PC-3 (cell line): ENCODE measurements at regions of chr6 and their contacts with region 1.

Region 1: GRCh38 chr6:51844336-51844735 is 243.1 kb downstream of the PKHD1 start:
- DNase-seq: peak; percentile 61
- ATAC-seq: peak; percentile 83
- H3K4me3 ChIP-seq: no peak overlapping the region
- H3K27ac ChIP-seq: no peak overlapping the region
- H3K4me1 ChIP-seq: peaks cover 10% of the 10 kb centered on the region
- H3K27me3 ChIP-seq: no peaks in the 10 kb centered on the region
- CTCF ChIP-seq: peak; percentile 80

Region 2: DNA sequence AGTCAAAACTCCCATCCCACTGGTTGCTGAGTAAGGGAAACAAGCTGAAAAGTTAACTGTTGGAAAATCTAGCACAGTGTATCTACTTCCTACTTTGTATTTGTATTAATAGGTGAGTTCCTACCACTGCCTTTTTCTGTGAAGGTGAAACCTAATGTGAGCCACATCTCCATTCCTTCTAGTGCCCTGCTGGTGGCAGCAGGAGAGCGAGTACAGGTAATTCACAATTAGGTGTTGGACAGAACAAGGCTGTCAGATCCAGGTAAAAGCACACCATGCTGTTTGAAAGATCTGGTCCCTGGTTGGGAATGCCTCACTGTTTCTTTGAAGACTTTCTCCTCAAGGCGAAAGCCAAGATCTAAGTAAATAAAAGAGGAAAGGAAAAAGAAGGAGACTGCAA is 285.3 kb before region 1 on chr6:
- CTCF ChIA-PET with region 1: no interaction called
- POLR2A ChIA-PET with region 1: no interaction called
- intact Hi-C with region 1: loop called (anchors 1 kb)
- DNase-seq: peak; percentile 69
- ATAC-seq: peak; percentile 84
- H3K4me3 ChIP-seq: no peak overlapping the region
- H3K27ac ChIP-seq: no peak overlapping the region
- H3K4me1 ChIP-seq: no peaks in the 10 kb centered on the region
- H3K27me3 ChIP-seq: peaks cover 3% of the 10 kb centered on the region; the same call in 1 of the 2 replicates
- CTCF ChIP-seq: peak; percentile 90

Region 3: GRCh38 chr6:51678905-51679620 is 165.3 kb before region 1 on chr6:
- CTCF ChIA-PET with region 1: no interaction called
- POLR2A ChIA-PET with region 1: no interaction called
- intact Hi-C with region 1: loop called (anchors 10 kb)
- DNase-seq: peak; percentile 92
- ATAC-seq: peak; percentile 86
- H3K4me3 ChIP-seq: peak overlapping the region; percentile 42
- H3K27ac ChIP-seq: peak overlapping the region; percentile 100
- H3K4me1 ChIP-seq: peaks cover 35% of the 10 kb centered on the region
- H3K27me3 ChIP-seq: no peaks in the 10 kb centered on the region
- CTCF ChIP-seq: no peak